ENCODE measurements at regions of chr10 and their contacts with region 1.

Region 1: DNA sequence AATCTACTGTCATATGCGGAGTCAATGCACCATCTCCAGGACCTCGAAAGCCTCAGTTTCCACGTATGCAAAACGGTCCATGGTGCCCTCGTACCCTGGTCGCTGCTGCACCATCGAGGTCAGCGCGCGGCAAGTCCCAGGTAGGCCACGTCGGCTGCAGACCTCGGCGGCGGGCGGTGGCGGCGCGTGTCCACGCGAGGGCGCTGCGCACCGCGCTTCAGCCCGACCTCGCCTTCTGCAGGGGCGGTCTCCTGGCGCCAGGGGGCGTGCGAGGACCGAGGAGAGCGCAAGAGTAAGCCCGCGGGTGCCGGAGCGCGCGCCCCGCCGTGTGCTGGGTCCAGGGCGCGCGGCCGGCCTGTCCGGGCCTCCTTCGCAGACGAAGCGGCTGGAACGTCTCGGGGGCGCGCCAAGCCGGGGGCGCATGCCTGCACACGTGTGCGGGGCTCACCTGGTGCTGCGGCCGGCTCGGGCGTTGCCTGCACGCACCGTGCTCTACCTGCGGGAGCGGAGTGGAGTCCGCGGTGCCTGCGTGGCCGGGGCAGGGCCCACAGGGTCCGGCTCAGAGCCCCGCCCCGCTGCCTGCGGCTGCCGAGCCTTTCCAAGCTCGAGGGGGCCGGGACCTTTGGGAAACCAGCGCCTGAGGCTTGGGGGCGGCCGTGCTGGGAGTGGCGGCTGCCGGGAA is 54.0 kb downstream of the GLRX3 start:
- DNase-seq: peak; percentile 90
- H3K4me3 ChIP-seq: peak overlapping the region; percentile 64
- H3K27ac ChIP-seq: peak overlapping the region; percentile 68
- H3K4me1 ChIP-seq: no peaks in the 10 kb centered on the region
- H3K27me3 ChIP-seq: no peaks in the 10 kb centered on the region
- CTCF ChIP-seq: peak; percentile 96

Region 2: DNA sequence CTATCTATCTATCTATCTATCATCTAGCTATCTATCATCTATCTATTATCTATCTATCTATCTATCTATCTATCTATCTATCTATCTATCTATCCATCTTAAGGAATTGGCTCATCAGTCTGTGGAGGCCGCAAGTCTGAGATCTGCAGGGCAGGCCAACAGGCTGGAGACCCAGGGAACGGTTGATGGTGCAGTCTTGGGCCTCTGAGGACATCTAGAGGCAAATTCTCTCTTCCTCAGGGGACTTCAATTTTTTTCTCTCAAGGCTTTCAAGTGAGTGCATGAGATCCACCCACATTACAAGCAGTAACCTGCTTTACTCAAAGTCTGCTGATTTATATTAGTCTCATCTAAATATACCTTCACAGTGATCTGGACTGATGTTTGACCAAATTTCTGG is 143.0 kb after region 1 on chr10:
- CTCF ChIA-PET with region 1: no interaction called
- POLR2A ChIA-PET with region 1: no interaction called
- intact Hi-C with region 1: loop called (anchors 5 kb)
- DNase-seq: peak; percentile 19
- H3K4me3 ChIP-seq: no peak overlapping the region
- H3K27ac ChIP-seq: no peak overlapping the region
- H3K4me1 ChIP-seq: no peaks in the 10 kb centered on the region
- H3K27me3 ChIP-seq: no peaks in the 10 kb centered on the region
- CTCF ChIP-seq: 0 out of 2 replicates have a peak, but pooled peaks have one; percentile 28

Region 3: GRCh38 chr10:130615489-130615888 is 425.3 kb after region 1 on chr10:
- CTCF ChIA-PET with region 1: no interaction called
- POLR2A ChIA-PET with region 1: no interaction called
- intact Hi-C with region 1: no loop called
- DNase-seq: no peak
- H3K4me3 ChIP-seq: no peak overlapping the region
- H3K27ac ChIP-seq: no peak overlapping the region
- H3K4me1 ChIP-seq: no peaks in the 10 kb centered on the region
- H3K27me3 ChIP-seq: no peaks in the 10 kb centered on the region
- CTCF ChIP-seq: no peak

Region 4: GRCh38 chr10:131033166-131034085 is 843.2 kb after region 1 on chr10:
- CTCF ChIA-PET with region 1: no interaction called
- POLR2A ChIA-PET with region 1: no interaction called
- intact Hi-C with region 1: no loop called
- DNase-seq: no peak
- H3K4me3 ChIP-seq: no peak overlapping the region
- H3K27ac ChIP-seq: no peak overlapping the region
- H3K4me1 ChIP-seq: no peaks in the 10 kb centered on the region
- H3K27me3 ChIP-seq: no peaks in the 10 kb centered on the region
- CTCF ChIP-seq: no peak

Region 5: GRCh38 chr10:131874991-131875451 is 1684.8 kb after region 1 on chr10:
- CTCF ChIA-PET with region 1: no interaction called
- POLR2A ChIA-PET with region 1: no interaction called
- intact Hi-C with region 1: loop called (anchors 2 kb)
- DNase-seq: peak; percentile 89
- H3K4me3 ChIP-seq: no peak overlapping the region
- H3K27ac ChIP-seq: no peak overlapping the region
- H3K4me1 ChIP-seq: peaks cover 7% of the 10 kb centered on the region
- H3K27me3 ChIP-seq: no peaks in the 10 kb centered on the region
- CTCF ChIP-seq: peak; percentile 85

Measured in A673 (cell line).